Mammary epithelial cell (primary cell): ENCODE measurements at regions of chr11 and their contacts with region 1.

Region 1: GRCh38 chr11:17827006-17827405 is 92.4 kb downstream of the KCNC1 start:
- DNase-seq: no peak
- H3K4me3 ChIP-seq: no peak overlapping the region
- H3K27ac ChIP-seq: no peak overlapping the region
- H3K4me1 ChIP-seq: no peaks in the 10 kb centered on the region
- H3K27me3 ChIP-seq: no peaks in the 10 kb centered on the region
- CTCF ChIP-seq: peak in 1 of 2 donors; percentile 61

Region 2: GRCh38 chr11:17598700-17599459 is 228.1 kb before region 1 on chr11:
- CTCF ChIA-PET with region 1: no interaction called
- dilution Hi-C with region 1: no loop called
- in situ Hi-C with region 1: no loop called
- intact Hi-C with region 1: loop called (anchors 5 kb)
- DNase-seq: peak; percentile 20
- H3K4me3 ChIP-seq: no peak overlapping the region
- H3K27ac ChIP-seq: no peak overlapping the region
- H3K4me1 ChIP-seq: no peaks in the 10 kb centered on the region
- H3K27me3 ChIP-seq: no peaks in the 10 kb centered on the region
- CTCF ChIP-seq: peak; percentile 96 to 97

Region 3: GRCh38 chr11:17730608-17731462 is 96.2 kb before region 1 on chr11:
- CTCF ChIA-PET with region 1: no interaction called
- dilution Hi-C with region 1: no loop called
- in situ Hi-C with region 1: no loop called
- intact Hi-C with region 1: loop called (anchors 1 kb)
- DNase-seq: peak; percentile 68
- H3K4me3 ChIP-seq: no peak overlapping the region
- H3K27ac ChIP-seq: no peak overlapping the region
- H3K4me1 ChIP-seq: peaks cover 9% of the 10 kb centered on the region
- H3K27me3 ChIP-seq: peaks cover 12% of the 10 kb centered on the region
- CTCF ChIP-seq: peak; percentile 82 to 96

Region 4: DNA sequence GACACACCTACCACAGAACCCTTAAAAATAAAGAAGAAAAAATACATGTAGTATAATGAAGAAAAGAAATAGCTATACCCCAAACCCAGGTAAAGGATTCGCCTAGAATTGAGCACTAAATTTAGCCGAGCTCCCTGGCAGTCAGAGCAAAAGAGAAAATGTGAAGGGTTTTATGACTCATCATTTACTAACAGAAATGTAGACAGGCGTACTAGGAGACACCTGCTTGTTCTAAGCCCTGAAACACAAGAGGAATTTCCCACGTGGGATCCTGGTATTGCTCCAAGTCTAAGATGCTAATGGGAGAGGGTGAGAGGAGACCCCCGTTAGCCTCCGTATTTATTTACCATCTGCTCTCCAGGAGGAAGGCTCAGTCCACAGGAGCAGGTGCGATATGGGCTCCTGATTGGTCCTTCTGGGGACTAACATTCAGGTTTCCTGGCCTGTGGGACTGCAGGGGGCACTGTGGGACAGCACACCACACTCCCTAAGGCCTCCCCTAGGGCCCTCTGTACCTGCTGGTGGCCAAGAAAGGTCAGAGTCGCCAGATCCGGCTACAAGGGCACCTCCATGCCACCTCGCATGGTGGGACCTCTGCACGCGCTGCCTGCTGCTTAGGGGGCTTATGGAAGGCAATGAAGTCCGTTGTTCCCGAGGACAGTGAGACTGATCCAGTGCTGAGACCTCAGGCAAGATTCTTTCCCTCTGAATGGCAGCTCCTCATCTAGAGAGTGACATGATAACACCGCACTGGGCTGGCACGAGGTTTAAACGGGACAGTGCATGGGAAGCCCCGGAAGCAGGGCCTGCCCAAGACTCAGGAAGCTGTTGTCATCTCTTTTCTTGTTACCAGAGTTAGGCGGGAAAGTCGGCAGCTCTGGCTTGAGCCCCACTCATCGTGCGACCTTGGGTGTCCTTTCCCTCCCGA is 66.6 kb before region 1 on chr11:
- CTCF ChIA-PET with region 1: interaction called, 3 read pairs
- dilution Hi-C with region 1: no loop called
- in situ Hi-C with region 1: no loop called
- intact Hi-C with region 1: loop called (anchors 1 kb)
- DNase-seq: peak; percentile 26
- H3K4me3 ChIP-seq: no peak overlapping the region
- H3K27ac ChIP-seq: no peak overlapping the region
- H3K4me1 ChIP-seq: no peaks in the 10 kb centered on the region
- H3K27me3 ChIP-seq: no peaks in the 10 kb centered on the region
- CTCF ChIP-seq: peak; percentile 53 to 64

Region 5: DNA sequence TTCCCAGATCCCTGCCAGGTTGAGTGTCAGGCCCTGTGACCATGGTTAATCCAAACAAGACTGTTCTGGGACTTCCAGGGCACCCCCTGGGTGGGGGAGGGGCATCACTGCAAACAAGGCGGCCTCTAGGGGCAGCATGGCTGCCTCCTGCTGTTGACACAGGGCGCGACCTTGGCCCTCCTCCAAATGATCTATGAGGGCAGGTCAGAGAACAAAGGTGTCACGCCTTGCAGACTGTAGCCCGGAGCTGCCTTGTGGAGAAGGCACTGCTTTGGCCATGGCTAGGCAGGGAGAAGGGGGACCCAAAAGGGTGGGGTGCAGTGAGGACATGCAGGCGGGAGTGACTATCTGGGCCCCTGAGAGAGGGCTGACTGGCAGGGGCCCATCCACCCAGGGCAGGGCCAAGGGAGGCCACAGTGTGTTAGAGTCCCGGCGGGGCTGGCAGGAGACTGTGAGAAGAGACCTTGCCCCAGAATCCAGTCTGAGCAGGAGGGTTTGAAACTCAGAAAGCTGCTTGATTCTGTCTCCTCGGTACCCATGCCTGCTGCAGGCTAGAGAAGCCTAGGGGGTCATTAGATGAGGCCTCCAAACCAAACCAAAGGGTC is 56.9 kb before region 1 on chr11:
- CTCF ChIA-PET with region 1: no interaction called
- dilution Hi-C with region 1: loop called (anchors 5 kb)
- in situ Hi-C with region 1: no loop called
- intact Hi-C with region 1: loop called (anchors 1 kb)
- DNase-seq: no peak
- H3K4me3 ChIP-seq: no peak overlapping the region
- H3K27ac ChIP-seq: no peak overlapping the region
- H3K4me1 ChIP-seq: peaks cover 4% of the 10 kb centered on the region
- H3K27me3 ChIP-seq: no peaks in the 10 kb centered on the region
- CTCF ChIP-seq: peak; percentile 3 to 18

Region 6: DNA sequence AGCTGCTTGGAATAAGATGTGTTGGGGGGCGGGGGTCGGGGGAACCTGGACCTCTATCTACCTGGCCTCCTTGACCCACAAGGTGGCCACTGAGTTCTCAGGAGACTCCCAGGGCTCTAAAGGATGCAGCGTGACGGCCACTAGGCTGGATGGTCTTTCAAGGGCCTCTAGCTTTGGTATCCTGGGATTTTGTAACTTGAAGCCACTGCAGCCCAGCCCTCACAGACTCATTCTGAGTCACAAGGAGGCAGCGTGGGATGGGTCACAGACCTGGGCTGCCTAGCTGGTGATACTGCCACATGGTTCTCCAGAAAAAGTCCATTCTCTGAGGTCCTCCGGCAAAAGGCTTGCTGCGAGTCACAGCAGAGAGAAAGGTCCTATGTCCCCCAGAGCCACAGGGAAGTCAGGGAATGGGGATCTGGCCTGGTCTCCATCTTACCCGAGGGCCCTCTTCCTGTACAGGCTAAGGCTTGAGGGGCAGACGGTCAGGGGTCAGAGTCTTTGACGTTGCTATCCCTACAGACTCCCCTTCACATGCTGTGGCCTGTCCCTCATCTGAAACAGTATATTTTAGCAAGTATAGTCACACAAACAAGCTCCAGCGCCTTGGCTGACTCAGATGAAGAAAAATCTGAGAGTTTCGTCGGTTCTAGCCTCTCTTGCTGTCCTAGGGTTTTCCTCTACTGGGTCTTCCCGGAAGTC is 40.0 kb before region 1 on chr11:
- CTCF ChIA-PET with region 1: interaction called, 4 read pairs
- dilution Hi-C with region 1: no loop called
- in situ Hi-C with region 1: no loop called
- intact Hi-C with region 1: loop called (anchors 5 kb)
- DNase-seq: peak; percentile 85
- H3K4me3 ChIP-seq: no peak overlapping the region
- H3K27ac ChIP-seq: no peak overlapping the region
- H3K4me1 ChIP-seq: peaks cover 20% of the 10 kb centered on the region
- H3K27me3 ChIP-seq: no peaks in the 10 kb centered on the region
- CTCF ChIP-seq: peak in 1 of 2 donors; percentile 11

Region 7: DNA sequence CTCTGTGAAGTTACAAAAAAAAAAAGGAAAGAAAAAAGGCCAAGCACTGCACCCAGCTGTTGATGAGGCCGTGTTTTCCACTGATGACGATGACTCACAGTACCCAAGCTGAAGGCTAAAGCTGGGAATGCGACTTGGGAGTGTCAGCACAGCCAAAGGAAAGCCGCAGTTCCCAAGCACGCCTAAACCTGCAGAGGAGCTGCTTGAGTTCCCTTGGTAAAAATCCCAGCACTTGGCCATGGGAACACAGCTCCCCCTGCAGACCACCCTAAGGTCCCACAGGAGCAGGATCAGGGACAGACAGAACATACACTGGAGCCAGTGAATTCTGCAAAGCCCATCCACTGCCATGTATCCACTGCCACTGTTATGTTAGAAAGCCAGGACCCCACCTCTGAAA is 146.0 kb after region 1 on chr11:
- CTCF ChIA-PET with region 1: no interaction called
- dilution Hi-C with region 1: no loop called
- in situ Hi-C with region 1: no loop called
- intact Hi-C with region 1: loop called (anchors 1 kb)
- DNase-seq: peak; percentile 94
- H3K4me3 ChIP-seq: no peak overlapping the region
- H3K27ac ChIP-seq: no peak overlapping the region
- H3K4me1 ChIP-seq: peaks cover 10% of the 10 kb centered on the region
- H3K27me3 ChIP-seq: no peaks in the 10 kb centered on the region
- CTCF ChIP-seq: peak; percentile 91 to 93